Activated T-helper 1 cell treated with anti-CD3 and anti-CD28 coated beads, Interleukin-12 subunit alpha, Interleukin-12 subunit beta, Interleukin-2, Interleukin-4 antibody, amounts not matched to agents 30 ng/mL and 10 ng/mL and 1 ng/mL, durations not matched to agents 14 hours and 24 hours and 36 hours (primary cell): ENCODE measurements at regions of chr10 and their contacts with region 1.

Region 1: DNA sequence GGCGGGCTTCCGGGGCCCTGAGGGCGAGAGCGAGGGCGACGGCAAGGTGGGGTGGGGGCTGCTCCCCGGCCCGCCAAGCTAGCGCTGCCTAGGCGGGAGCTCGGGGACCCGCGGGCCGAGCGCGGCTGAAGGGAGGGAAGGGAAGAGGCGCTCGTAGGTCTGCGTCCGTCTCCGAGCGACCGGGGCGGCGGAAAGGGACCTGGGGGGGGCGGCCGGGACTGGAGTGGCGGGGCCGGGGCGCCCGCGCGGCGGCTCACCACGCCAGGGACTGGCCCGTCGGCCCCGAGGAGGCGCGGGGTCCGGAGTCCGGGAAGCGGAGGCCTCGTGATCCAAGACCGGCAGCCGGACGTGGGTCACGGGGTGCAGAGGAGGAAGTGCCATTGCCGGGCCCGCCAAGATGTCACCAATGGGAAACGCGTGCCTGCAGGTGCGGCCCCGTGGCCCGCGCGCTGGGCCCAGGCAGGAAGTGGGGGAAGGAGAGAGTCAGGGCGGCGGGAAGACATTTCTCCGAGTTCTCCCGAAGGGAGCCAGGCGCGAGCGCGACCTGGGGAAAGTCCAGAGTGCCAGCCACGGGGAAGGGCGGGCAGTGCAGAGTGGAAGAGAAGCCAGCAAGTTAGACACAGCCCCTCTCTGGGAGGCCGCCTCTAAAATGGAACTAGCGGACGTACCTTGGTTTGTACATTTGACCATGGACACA is 11.9 kb downstream of the HNRNPF start:
- DNase-seq: peak; percentile 81
- H3K4me3 Mint-ChIP-seq: peak overlapping the region; percentile 90
- H3K27ac Mint-ChIP-seq: peak overlapping the region; percentile 94
- H3K4me1 Mint-ChIP-seq: peaks cover 83% of the 10 kb centered on the region
- H3K27me3 Mint-ChIP-seq: no peaks in the 10 kb centered on the region

Region 2: GRCh38 chr10:43292755-43293676 is 104.1 kb before region 1 on chr10:
- intact Hi-C with region 1: loop called (anchors 5 kb)
- DNase-seq: no peak
- H3K4me3 Mint-ChIP-seq: peak overlapping the region; percentile 9
- H3K27ac Mint-ChIP-seq: peak overlapping the region; percentile 73
- H3K4me1 Mint-ChIP-seq: peaks cover 86% of the 10 kb centered on the region
- H3K27me3 Mint-ChIP-seq: peaks cover 9% of the 10 kb centered on the region

Region 3: GRCh38 chr10:43407576-43408330 is 10.7 kb after region 1 on chr10:
- intact Hi-C with region 1: loop called (anchors 1 kb)
- DNase-seq: peak; percentile 81
- H3K4me3 Mint-ChIP-seq: peak overlapping the region; percentile 99
- H3K27ac Mint-ChIP-seq: peak overlapping the region; percentile 100
- H3K4me1 Mint-ChIP-seq: peaks cover 42% of the 10 kb centered on the region
- H3K27me3 Mint-ChIP-seq: no peaks in the 10 kb centered on the region

Region 4: DNA sequence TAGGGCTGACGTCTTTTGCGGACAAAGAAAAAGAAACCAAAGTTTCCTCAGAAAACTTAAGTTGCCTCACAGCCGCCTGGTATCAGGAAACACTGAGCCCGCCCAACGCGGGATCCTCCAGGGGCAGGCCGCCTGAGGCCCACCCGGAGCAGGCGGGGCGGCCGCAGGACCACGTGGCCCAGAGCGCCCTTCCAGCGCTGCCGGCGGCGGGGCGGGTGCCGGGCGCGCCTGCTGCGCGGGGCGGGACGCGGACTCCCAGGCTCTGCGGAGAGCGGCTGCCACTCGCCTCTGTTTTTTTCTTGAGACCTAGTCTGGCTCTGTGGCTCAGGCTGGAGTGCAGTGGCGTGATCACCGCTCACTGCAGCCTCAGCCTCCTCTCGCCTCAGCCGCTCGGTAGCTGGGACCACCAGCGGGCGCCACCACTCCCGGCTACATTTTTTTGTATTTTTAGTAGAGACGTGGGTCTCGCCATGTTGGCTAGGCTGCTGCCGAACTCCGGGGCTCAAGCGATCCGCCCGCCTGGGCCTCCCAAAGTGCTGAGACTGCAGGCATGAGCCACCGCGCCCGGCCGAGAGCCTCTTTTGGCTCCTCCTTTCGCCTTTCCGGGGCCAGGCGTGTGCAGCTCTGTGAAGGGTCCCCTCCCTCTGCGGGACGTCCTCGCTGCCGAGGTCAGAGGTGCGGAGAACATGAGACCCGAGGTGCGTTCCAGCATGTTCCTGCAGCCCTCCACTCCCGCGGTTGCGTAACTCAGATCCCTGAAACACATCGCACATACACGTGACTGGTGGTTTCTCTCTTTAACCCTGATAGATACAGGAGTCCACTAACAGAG is 23.5 kb after region 1 on chr10:
- intact Hi-C with region 1: loop called (anchors 1 kb)
- DNase-seq: peak; percentile 78
- H3K4me3 Mint-ChIP-seq: peak overlapping the region; percentile 85
- H3K27ac Mint-ChIP-seq: peak overlapping the region; percentile 99
- H3K4me1 Mint-ChIP-seq: peaks cover 45% of the 10 kb centered on the region
- H3K27me3 Mint-ChIP-seq: no peaks in the 10 kb centered on the region

Region 5: DNA sequence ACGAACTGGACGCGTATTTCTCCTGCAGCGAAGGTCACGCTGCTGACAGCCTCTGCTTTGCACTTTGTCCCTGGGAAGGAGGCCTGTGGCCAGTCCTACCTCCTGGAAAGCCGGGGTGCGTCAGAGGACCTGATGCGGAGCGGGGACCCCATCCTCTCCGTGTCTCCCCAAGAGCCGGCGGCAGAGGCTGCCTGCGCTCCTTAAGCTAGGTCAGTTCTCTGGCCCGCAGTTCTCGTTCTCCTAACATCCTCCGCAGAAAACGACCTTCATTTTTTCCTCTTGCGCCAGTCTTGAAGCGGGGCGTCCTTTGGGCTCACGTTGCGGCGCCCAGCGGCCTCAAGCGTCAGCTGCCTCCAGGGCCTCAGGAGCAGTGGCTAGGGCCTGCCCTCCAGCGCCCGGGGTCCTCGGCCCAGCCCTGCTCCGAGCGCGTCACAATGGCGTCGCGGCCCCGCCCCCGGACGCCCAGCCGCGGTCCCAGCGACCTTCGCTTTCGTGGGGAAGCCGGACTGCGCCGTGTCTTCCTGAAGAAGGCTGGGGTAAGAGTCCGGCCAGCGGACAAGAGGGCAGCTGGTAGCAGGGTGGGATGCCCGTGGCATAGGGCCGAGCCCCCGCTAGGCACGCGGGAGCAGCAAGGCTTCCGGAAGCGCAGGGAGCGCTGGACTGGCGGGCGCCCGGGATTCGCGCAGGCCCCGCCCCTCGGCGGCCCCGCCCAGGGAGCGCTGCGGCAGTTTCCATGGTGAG is 39.5 kb after region 1 on chr10 and contains the start of gene ZNF487:
- intact Hi-C with region 1: loop called (anchors 1 kb)
- DNase-seq: peak; percentile 91
- H3K4me3 Mint-ChIP-seq: peak within 1 kb of the TSS; percentile 88
- H3K27ac Mint-ChIP-seq: peak within 1 kb of the TSS; percentile 94
- H3K4me1 Mint-ChIP-seq: peaks cover 11% of the 10 kb centered on the region
- H3K27me3 Mint-ChIP-seq: no peaks in the 10 kb centered on the region
- total RNA-seq, gene ZNF487: 1.8 and 2.0 TPM in 2 replicates